ENCODE measurements at regions of chr1 and their contacts with region 1.

Region 1: DNA sequence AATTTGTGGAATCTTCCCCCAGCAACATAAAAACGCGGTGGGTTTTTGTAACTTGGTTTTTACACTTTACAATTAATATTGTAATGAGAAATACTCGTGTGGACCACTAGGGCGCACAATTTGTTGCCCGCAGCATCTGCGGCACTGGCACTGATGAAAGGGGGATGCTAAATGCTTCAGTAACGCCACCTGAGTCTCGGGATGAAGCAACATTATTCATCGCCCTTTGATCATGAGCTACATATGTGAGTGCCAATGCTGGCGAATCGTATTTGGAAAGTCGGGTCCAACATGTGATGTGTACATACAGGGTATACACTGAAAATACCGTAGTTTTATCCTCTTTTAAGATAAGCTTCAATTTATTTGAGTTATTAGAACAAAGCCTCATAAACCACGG is 34.2 kb upstream of the COX20 start:
- DNase-seq: peak; percentile 74

Region 2: GRCh38 chr1:244603498-244603897 is 197.7 kb before region 1 on chr1:
- CTCF ChIA-PET with region 1: interaction called, 32 read pairs
- POLR2A ChIA-PET with region 1: no interaction called
- DNase-seq: peak; percentile 38

Region 3: DNA sequence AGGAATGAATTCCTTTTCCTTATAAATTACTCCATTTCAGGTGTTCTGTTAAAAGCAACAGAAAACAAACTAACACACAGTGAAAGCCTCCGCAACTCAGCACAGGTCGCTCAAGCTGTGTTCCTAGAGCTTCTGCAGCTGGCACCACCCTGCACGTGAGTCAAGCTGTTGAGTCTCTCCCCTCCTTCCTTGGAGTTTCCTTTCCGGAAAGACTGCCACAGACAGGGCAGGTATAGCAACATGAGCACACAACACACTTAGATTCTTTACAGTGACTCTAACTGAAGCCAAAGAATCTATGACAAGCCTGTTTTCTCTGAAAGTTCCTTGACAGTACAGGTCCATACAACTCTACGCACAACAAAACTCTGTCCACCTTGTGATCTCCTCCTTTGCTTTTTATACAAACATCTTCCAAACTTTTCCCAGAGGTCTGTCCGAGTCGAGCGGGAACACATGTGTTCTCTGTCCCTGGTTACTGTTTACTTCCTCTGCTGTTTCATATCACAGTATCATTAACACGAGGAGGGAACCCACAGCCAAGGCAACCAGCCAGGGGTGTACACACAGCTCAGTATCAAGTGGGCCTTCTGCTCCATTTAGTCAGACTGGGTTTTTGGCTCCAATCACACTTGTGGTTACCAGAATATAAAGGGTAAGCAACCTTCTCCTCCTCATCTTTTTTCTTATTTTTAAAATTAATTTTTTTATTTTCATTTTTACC is 187.0 kb before region 1 on chr1:
- CTCF ChIA-PET with region 1: interaction called, 12 read pairs
- POLR2A ChIA-PET with region 1: no interaction called
- DNase-seq: no peak

Measured in HEK293T (cell line).